Uterus (tissue), 4 donors: ENCODE measurements at regions of chr12 and their contacts with region 1.

Region 1: GRCh38 chr12:111451649-111452129 is 46.0 kb downstream of the SH2B3 start:
- DNase-seq: peak in 1 of 2 donors; percentile 11
- H3K4me3 ChIP-seq: no peak overlapping the region
- H3K27ac ChIP-seq: peak overlapping the region in 1 of 2 donors; percentile 34
- H3K4me1 ChIP-seq: no peaks in the 10 kb centered on the region
- H3K27me3 ChIP-seq: no peaks in the 10 kb centered on the region
- CTCF ChIP-seq: peak; percentile 74 to 85 (median 78)
- POLR2A ChIP-seq: no peak

Region 2: DNA sequence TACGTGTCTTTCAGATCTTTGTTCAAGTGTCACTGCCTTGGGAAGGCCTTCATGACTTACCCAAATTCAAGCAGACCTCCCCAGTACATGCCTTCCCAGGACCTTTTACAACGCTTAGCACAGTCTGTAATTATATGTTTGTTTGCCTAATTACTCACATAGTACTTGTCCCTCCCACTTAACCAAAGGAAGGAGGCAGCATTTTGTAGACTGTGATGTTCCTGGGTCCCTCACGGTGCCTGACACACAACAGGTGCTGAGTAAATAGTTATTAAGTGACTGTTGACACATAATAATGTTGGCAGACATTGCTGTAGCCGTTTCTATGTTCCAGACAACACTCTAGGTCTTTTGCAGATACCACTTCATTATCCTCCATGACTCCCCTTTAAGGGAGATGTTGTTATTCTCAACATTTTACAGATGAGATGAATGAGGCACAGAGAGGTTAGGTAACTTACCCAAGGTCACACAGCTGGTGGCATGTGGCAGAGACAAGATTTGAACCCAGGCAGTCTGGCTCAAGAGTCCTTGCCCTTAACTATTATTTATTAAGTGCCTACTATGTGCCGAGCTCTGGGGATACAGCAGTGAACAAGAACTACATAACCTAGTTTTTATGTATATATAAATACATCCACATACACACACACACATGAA is 213.5 kb before region 1 on chr12:
- intact Hi-C with region 1: no loop called
- DNase-seq: no peak
- H3K4me3 ChIP-seq: no peak overlapping the region
- H3K27ac ChIP-seq: no peak overlapping the region
- H3K4me1 ChIP-seq: no peaks in the 10 kb centered on the region
- H3K27me3 ChIP-seq: no peaks in the 10 kb centered on the region
- CTCF ChIP-seq: no peak
- POLR2A ChIP-seq: no peak

Region 3: GRCh38 chr12:111396726-111397445 is 54.8 kb before region 1 on chr12:
- intact Hi-C with region 1: loop called (anchors 5 kb)
- DNase-seq: peak; percentile 76 to 81
- H3K4me3 ChIP-seq: no peak overlapping the region
- H3K27ac ChIP-seq: peak overlapping the region; percentile 39 to 44
- H3K4me1 ChIP-seq: no peaks in the 10 kb centered on the region
- H3K27me3 ChIP-seq: no peaks in the 10 kb centered on the region
- CTCF ChIP-seq: peak; percentile 98 to 100 (median 99)
- POLR2A ChIP-seq: peak in 1 of 2 donors; percentile 27

Region 4: GRCh38 chr12:111628505-111629260 is 177.0 kb after region 1 on chr12:
- intact Hi-C with region 1: no loop called
- DNase-seq: no peak
- H3K4me3 ChIP-seq: no peak overlapping the region
- H3K27ac ChIP-seq: no peak overlapping the region
- H3K4me1 ChIP-seq: no peaks in the 10 kb centered on the region
- H3K27me3 ChIP-seq: no peaks in the 10 kb centered on the region
- CTCF ChIP-seq: no peak
- POLR2A ChIP-seq: no peak

Region 5: GRCh38 chr12:111881716-111882115 is 430.0 kb after region 1 on chr12:
- intact Hi-C with region 1: no loop called
- DNase-seq: no peak
- H3K4me3 ChIP-seq: no peak overlapping the region
- H3K27ac ChIP-seq: no peak overlapping the region
- H3K4me1 ChIP-seq: no peaks in the 10 kb centered on the region
- H3K27me3 ChIP-seq: no peaks in the 10 kb centered on the region
- CTCF ChIP-seq: no peak
- POLR2A ChIP-seq: no peak

Region 6: DNA sequence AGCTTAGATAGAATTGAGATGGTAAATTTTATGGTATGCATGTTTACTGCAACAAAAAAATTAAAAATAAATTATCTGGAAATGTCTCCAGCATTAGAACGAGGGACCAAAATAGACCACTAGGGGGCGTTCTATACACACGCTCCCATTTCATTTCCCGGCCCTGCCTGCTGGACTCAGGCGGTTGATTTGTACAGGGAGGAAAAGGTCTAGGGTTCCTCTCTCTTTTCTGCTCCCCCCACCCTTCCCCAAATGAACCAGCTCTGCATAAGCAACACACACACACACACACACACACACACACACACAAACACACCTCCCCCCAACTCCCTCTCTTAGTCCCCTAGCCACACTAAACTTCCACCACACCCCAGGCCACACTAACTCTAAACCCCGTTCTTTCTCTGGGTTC is 1597.0 kb after region 1 on chr12:
- intact Hi-C with region 1: no loop called
- DNase-seq: no peak
- H3K4me3 ChIP-seq: no peak overlapping the region
- H3K27ac ChIP-seq: no peak overlapping the region
- H3K4me1 ChIP-seq: no peaks in the 10 kb centered on the region
- H3K27me3 ChIP-seq: no peaks in the 10 kb centered on the region
- CTCF ChIP-seq: peak; percentile 50 to 77 (median 62)
- POLR2A ChIP-seq: no peak